Calu3 (cell line): ENCODE measurements at regions of chr12 and their contacts with region 1.

Region 1: DNA sequence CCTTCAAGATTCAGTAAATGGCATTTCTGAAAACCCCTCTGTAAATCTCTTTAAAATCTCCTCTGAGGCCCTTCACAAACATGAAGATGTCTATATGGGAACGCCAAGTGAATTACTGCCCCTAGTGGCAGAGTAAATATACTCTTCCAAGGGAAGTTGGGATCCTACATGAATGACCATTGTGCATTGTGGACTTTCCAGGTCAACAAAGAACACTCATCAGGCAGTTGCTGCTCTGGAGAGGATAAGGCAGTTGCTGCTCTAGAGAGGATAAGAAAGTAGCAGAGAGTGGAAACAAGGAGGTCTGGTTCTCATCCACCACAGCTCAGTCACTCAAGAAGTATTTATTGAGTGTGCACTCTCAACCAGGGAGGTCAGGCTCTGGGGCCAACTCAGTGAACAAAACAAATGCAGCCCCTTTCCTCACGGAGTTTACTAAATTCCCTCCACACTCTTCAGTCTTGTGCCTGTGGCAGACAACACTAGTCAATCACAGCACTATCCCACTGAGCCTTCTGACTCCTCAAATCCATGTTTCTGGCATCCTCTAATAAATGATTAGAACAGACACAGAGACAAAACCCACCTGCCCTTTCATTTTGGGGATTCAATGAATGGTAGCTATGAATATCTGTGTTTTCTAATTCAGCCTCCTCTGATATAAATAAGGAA is 52.9 kb downstream of the SVOP start:
- DNase-seq: no peak
- H3K4me3 Mint-ChIP-seq: no peak overlapping the region
- H3K27ac Mint-ChIP-seq: no peak overlapping the region
- H3K4me1 Mint-ChIP-seq: no peaks in the 10 kb centered on the region
- H3K27me3 Mint-ChIP-seq: peaks cover 49% of the 10 kb centered on the region
- CTCF ChIP-seq: peak; percentile 51

Region 2: DNA sequence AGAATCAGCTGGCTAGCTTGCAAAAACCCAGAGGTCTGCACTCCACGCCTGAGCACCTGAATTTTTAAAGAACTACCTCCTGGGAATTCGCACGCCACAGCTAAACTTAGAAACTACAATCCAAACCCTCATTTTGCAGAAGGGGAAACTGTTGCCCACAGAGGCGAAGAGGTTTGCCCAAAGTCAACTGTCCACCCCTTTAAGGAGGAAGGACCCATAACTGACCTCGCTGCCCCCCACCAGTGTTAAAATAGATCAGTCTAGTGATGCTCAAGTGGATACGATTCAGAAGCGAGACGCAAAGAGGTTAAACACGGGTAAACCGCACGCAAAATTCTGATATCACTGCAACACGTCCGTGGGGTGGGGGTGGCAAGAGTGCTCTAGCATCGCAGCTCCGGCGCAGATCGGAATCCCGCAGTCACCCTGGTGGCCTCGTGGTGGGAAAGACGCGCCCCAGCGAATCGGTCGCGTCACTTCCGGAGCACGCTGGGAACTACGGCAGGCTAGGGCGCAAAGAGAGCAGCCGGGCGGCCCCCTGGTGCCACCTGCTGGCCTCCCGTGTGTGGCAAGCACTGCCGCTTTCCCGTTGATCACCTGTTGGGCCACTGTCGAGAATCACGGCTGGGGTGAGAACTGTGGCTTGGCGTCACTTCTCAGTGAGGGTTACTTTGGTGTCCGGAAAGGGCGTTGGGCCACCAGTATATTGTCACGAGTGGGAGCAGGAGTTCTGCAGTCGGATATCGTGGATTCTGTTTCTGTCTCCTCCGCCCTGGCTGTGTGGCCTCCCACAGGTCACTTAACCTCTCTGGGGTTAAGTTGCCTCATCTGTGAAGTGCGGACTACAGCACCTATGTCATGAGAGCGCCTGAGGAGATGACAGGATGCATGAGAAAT is 125.3 kb after region 1 on chr12 and contains the start of gene ALKBH2:
- CTCF ChIA-PET with region 1: no interaction called
- intact Hi-C with region 1: loop called (anchors 10 kb)
- DNase-seq: peak; percentile 96
- H3K4me3 Mint-ChIP-seq: peak within 1 kb of the TSS; percentile 68
- H3K27ac Mint-ChIP-seq: peak within 1 kb of the TSS; percentile 53
- H3K4me1 Mint-ChIP-seq: peaks cover 13% of the 10 kb centered on the region
- H3K27me3 Mint-ChIP-seq: no peaks in the 10 kb centered on the region
- CTCF ChIP-seq: peak; percentile 95
- total RNA-seq, gene ALKBH2: 43.1 and 43.2 TPM in 2 replicates